Aorta (tissue), 5 donors: ENCODE measurements at regions of chr22 and their contacts with region 1.

Region 1: GRCh38 chr22:26756675-26757293 is 99.4 kb downstream of the MIAT start:
- DNase-seq: peak; percentile 69 to 92
- ATAC-seq: peak; percentile 91
- H3K4me3 ChIP-seq: no peak overlapping the region
- H3K27ac ChIP-seq: no peak overlapping the region
- H3K4me1 ChIP-seq: peaks cover 0 to 1% of the 10 kb centered on the region in 2 donors
- H3K27me3 ChIP-seq: no peaks in the 10 kb centered on the region

Region 2: DNA sequence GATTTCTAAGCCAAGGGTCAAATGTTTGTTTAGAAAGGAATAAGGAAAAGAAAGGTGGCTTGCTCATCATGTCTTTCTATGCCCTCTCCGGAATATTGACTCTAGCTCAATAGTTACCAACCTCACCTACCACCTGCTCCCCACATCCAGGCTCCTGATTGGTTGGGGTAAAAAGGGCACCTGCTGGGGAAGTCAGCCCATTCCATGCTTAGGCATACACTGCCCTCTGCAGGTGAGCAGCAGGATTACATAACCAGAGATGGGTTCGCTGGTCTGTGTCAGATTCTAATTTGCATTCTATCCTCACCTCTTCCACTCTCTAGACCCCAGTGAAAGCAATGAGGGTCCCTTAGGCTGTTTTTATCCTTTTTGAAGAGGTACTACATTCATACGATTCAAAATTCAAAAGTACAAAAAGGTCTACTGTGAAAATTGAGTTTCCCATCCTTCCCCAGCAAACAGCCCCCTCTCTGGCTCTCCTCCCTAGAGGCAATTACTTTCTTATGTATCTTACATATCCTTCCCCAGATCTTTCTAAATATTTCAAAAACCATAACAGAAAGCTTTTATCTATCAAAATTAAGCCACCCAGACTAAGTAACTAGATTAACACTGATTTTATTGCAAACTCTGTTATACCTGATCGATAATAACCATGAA is 425.7 kb before region 1 on chr22:
- intact Hi-C with region 1: no loop called
- DNase-seq: no peak
- ATAC-seq: no peak
- H3K4me3 ChIP-seq: no peak overlapping the region
- H3K27ac ChIP-seq: no peak overlapping the region
- H3K4me1 ChIP-seq: no peaks in the 10 kb centered on the region
- H3K27me3 ChIP-seq: no peaks in the 10 kb centered on the region

Region 3: DNA sequence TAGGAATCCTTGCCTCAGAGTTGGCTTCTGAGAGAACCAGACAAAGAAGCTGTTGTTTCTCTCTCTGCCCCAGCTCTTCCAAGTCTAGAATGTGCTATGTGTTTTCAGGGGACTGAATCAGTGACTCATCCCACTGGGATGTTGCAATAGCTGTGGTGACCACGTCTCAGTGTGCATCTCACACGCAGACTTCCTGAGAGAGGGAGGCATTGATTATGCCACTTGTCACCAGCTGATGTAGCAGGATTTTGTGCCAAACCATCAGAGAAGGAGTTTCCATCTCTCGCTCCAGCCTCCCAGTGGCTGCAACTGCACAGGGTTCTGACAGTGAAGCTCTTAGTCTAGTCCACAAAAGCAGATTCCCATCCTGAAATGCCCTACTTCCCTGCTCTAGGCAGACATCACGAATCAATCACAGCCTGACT is 356.4 kb after region 1 on chr22:
- intact Hi-C with region 1: loop called in 1 of 2 experiments (anchors 5 kb)
- DNase-seq: peak in 1 of 2 donors; percentile 88
- ATAC-seq: peak; percentile 72
- H3K4me3 ChIP-seq: no peak overlapping the region
- H3K27ac ChIP-seq: no peak overlapping the region
- H3K4me1 ChIP-seq: peaks cover 2 to 3% of the 10 kb centered on the region in 2 donors
- H3K27me3 ChIP-seq: no peaks in the 10 kb centered on the region

Region 4: GRCh38 chr22:27420817-27421361 is 664.1 kb after region 1 on chr22:
- intact Hi-C with region 1: loop called in 1 of 2 experiments (anchors 5 kb)
- DNase-seq: peak; percentile 91 to 92
- ATAC-seq: peak; percentile 89
- H3K4me3 ChIP-seq: no peak overlapping the region
- H3K27ac ChIP-seq: peak overlapping the region; percentile 7 to 10
- H3K4me1 ChIP-seq: peaks cover 0 to 5% of the 10 kb centered on the region in 2 donors
- H3K27me3 ChIP-seq: no peaks in the 10 kb centered on the region

Region 5: GRCh38 chr22:28009272-28009827 is 1252.6 kb after region 1 on chr22:
- intact Hi-C with region 1: loop called (anchors 5 to 10 kb)
- DNase-seq: peak; percentile 78 to 92
- ATAC-seq: peak; percentile 84
- H3K4me3 ChIP-seq: no peak overlapping the region
- H3K27ac ChIP-seq: no peak overlapping the region
- H3K4me1 ChIP-seq: no peaks in the 10 kb centered on the region
- H3K27me3 ChIP-seq: no peaks in the 10 kb centered on the region